Lower lobe of right lung (tissue), 2 donors: ENCODE measurements at regions of chr6 and their contacts with region 1.

Region 1: GRCh38 chr6:83514866-83515466 is 2.6 kb downstream of the PRSS35 start:
- DNase-seq: no peak
- ATAC-seq: peak in 1 of 2 donors; percentile 39
- H3K4me3 ChIP-seq: no peak overlapping the region
- H3K27ac ChIP-seq: no peak overlapping the region
- H3K4me1 ChIP-seq: peaks cover 6% of the 10 kb centered on the region
- H3K27me3 ChIP-seq: no peaks in the 10 kb centered on the region
- CTCF ChIP-seq: peak; percentile 78

Region 2: DNA sequence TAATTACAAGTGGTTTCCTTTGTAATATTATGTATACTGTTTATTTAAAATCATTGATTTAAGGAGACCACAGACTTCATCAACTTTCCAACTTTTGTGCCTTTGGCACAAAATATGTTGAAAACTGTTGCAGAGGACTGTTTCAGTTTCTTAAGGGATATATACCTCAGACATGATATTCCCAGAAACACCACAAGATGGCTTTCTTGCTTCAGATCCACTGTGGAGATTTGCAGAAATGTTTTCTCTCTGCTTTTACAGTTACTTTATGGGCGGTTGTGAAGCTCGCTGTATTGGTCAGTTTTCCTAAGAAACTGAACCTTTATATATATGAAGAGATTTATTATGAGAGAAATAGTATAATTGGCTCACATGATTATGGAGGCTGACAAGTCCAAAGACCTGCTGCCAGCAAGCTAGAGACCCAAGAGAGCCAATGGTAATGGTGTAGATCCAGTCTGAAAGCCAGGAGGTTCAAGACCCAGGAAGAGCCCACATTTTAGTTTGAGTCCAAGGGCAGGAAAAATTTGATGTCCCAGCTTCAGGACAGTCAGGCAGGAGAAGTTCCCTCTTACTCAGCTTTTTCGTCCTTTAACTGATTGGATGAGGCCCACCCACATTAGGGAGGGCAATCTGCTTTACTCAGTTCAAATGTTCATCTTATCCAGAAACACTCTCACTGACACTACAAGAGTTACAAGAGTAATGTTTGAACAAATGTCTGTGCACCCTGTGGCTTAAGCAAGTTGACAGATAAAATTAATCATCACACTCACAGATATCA is 96.9 kb before region 1 on chr6:
- intact Hi-C with region 1: loop called (anchors 5 kb)
- DNase-seq: no peak
- ATAC-seq: peak in 1 of 2 donors; percentile 85
- H3K4me3 ChIP-seq: no peak overlapping the region
- H3K27ac ChIP-seq: no peak overlapping the region
- H3K4me1 ChIP-seq: no peaks in the 10 kb centered on the region
- H3K27me3 ChIP-seq: no peaks in the 10 kb centered on the region
- CTCF ChIP-seq: peak; percentile 69

Region 3: GRCh38 chr6:83467620-83468036 is 47.3 kb before region 1 on chr6:
- intact Hi-C with region 1: no loop called
- DNase-seq: peak; percentile 77
- ATAC-seq: peak; percentile 78 to 89
- H3K4me3 ChIP-seq: no peak overlapping the region
- H3K27ac ChIP-seq: peak overlapping the region; percentile 50
- H3K4me1 ChIP-seq: no peaks in the 10 kb centered on the region
- H3K27me3 ChIP-seq: no peaks in the 10 kb centered on the region
- CTCF ChIP-seq: no peak

Region 4: GRCh38 chr6:83741089-83741488 is 226.1 kb after region 1 on chr6:
- intact Hi-C with region 1: no loop called
- DNase-seq: no peak
- ATAC-seq: no peak
- H3K4me3 ChIP-seq: no peak overlapping the region
- H3K27ac ChIP-seq: no peak overlapping the region
- H3K4me1 ChIP-seq: no peaks in the 10 kb centered on the region
- H3K27me3 ChIP-seq: no peaks in the 10 kb centered on the region
- CTCF ChIP-seq: no peak